Activated CD4-positive, alpha-beta T cell treated with anti-CD3 and anti-CD28 coated beads, Interleukin-2, amount 10 ng/mL, durations not matched to agents 7 days and 5 days (primary cell): ENCODE measurements at regions of chr16 and their contacts with region 1.

Region 1: GRCh38 chr16:3150346-3151218 is 15.8 kb downstream of the ZNF213 start:
- DNase-seq: peak; percentile 97
- H3K4me3 Mint-ChIP-seq: peak overlapping the region; percentile 80
- H3K27ac Mint-ChIP-seq: peak overlapping the region; percentile 89
- H3K4me1 Mint-ChIP-seq: peaks cover 35% of the 10 kb centered on the region
- H3K27me3 Mint-ChIP-seq: peaks cover 27% of the 10 kb centered on the region

Region 2: DNA sequence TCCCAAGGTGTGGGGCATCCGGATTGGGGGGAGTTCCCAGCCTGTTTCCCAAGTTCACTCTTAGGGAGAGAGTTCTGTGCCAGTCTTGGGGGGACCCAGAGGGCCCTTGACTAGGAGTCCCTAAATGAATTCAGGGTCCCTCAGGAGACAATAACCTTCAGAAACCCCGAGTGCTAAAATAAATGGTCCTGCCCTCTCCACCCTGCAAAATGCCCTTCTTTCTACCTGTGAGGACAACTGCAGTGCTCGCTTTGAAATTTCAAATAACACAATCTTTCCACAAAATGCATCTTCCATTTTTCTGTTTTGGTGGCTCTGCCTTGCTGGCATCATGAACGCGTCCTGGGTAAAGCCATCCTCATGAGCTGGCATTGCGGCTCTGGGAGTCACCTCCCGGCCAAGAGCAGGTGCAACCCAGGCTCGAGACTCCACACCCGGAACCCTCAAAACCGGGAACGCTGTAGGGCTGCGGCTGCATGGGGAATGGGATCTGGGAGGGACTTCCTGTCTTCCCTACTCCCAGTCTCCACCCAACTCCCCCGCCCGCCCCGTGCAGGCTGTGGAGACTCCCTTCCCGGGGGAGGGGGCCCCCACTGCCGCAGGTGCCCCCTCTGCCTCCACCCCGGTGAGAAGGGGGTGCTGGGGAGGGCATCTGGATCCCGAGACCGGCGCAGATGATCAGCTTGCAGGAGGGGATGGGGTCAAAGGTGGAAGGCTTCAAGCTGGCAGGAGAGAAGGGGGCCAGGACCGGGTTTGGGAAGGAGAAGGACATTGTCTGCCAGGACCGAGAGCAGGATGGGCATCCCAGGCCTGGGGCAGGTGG is 38.3 kb before region 1 on chr16 and contains the start of gene ZNF205:
- CTCF ChIA-PET with region 1: interaction called, 13 read pairs
- POLR2A ChIA-PET with region 1: no interaction called
- DNase-seq: no peak
- H3K4me3 Mint-ChIP-seq: no peak within 1 kb of the TSS
- H3K27ac Mint-ChIP-seq: no peak within 1 kb of the TSS
- H3K4me1 Mint-ChIP-seq: peaks cover 3% of the 10 kb centered on the region
- H3K27me3 Mint-ChIP-seq: peaks cover 8% of the 10 kb centered on the region
- total RNA-seq, gene ZNF205: not detected

Region 3: DNA sequence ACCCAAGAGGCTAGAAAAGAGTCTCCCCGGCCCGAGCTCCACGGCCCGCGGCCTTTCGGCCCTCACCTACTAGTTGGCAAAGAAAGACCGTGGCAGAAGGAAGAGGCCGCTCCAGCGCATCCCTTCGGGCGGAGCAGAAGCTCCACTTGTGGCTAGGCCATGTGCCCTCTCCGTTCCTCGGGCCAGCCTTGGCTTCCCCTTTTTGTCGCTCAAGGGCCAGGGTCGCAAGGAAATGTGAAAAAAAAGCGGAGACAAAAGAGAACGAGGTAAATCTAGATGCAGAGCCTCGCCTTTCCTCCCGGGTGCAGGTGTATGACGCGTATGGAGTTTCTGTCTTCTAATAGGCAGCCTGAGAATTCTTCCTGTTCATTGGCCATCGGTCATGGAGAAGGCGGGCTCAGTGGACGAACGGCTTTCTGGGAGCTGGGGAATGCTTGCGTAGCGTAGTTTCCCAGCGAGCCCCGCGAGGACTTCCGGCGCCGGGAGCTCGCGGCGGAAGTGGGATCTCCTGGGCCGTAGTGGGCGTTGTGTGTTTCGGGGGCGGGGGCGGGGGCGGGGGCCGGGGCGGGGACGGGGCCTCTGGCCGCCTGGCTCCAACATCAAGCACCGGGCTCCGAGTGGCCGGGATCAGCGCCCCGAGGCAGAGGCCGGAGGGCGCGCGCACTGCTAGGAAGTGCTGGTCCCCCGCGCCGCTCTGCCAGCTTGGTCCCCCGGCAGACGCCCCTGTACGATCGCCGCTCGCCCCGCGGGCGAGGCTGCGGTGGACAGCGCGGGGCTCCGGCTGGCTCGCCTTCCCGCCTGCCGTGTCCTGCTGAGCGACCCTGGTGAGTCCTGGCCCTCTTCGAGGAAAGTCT is 15.8 kb before region 1 on chr16 and contains the start of gene ZNF213:
- CTCF ChIA-PET with region 1: interaction called, 153 read pairs
- POLR2A ChIA-PET with region 1: no interaction called
- DNase-seq: peak; percentile 97
- H3K4me3 Mint-ChIP-seq: peak within 1 kb of the TSS; percentile 98
- H3K27ac Mint-ChIP-seq: peak within 1 kb of the TSS; percentile 95
- H3K4me1 Mint-ChIP-seq: peaks cover 33% of the 10 kb centered on the region
- H3K27me3 Mint-ChIP-seq: no peaks in the 10 kb centered on the region
- total RNA-seq, gene ZNF213: 9.9 to 11.1 TPM